ENCODE measurements at regions of chr16 and their contacts with region 1.

Region 1: GRCh38 chr16:27639561-27640276 is 89.8 kb downstream of the KATNIP start:
- DNase-seq: peak; percentile 83
- H3K4me3 ChIP-seq: no peak overlapping the region
- H3K27ac ChIP-seq: no peak overlapping the region
- H3K4me1 ChIP-seq: peaks cover 0 to 9% of the 10 kb centered on the region in 2 experiments; a peak in 1 of 4 replicates
- H3K27me3 ChIP-seq: no peaks in the 10 kb centered on the region
- CTCF ChIP-seq: peak; percentile 80
- EP300 ChIP-seq: no peak
- RAD21 ChIP-seq: peak; percentile 87

Region 2: GRCh38 chr16:27374804-27375425 is 264.8 kb before region 1 on chr16:
- CTCF ChIA-PET with region 1: no interaction called
- POLR2A ChIA-PET with region 1: no interaction called
- DNase-seq: peak; percentile 76
- H3K4me3 ChIP-seq: no peak overlapping the region
- H3K27ac ChIP-seq: no peak overlapping the region
- H3K4me1 ChIP-seq: no peaks in the 10 kb centered on the region
- H3K27me3 ChIP-seq: no peaks in the 10 kb centered on the region; the same call in 1 of the 2 replicates
- CTCF ChIP-seq: peak; percentile 63
- EP300 ChIP-seq: no peak
- RAD21 ChIP-seq: peak; percentile 49

Region 3: GRCh38 chr16:27444015-27444414 is 195.7 kb before region 1 on chr16:
- CTCF ChIA-PET with region 1: no interaction called
- POLR2A ChIA-PET with region 1: no interaction called
- DNase-seq: no peak
- H3K4me3 ChIP-seq: no peak overlapping the region
- H3K27ac ChIP-seq: no peak overlapping the region
- H3K4me1 ChIP-seq: peaks cover 0 to 5% of the 10 kb centered on the region in 2 experiments; a peak in 1 of 4 replicates
- H3K27me3 ChIP-seq: no peaks in the 10 kb centered on the region
- CTCF ChIP-seq: no peak
- EP300 ChIP-seq: no peak
- RAD21 ChIP-seq: no peak

Region 4: DNA sequence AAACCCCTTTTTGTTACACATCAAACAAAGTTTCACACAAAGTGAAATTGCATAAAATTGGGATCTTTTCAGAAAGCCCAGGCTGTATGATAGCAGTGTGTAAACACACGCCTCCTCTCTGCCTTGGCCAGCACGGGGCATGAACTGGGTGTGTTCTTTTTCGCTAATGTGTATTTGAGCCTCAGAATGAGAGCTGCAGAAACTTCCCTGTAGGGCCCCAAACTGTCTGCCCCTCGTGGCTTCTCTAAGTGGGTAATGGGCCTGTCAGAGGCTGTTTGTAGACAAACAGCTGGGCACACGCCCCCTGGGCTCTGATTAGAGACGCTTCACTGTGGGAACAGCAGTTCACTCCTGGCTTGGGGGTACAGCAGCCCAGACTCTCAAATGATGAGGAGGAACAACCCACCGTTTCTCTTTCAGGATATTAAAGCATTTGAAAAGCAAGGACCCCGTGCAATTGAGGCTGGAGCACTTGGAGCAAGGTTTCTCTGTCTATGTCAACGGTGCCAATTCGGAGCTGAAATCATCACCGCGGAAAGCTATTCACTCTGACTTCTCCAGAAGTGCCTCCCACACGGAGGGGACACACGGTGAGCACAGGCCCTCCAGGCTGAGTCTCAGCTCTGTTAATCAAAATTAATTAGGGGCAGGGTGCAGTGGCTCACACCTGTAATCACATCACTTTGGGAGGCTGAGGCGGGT is 11.3 kb before region 1 on chr16:
- CTCF ChIA-PET with region 1: interaction called, 47 read pairs
- POLR2A ChIA-PET with region 1: no interaction called
- DNase-seq: peak; percentile 33
- H3K4me3 ChIP-seq: no peak overlapping the region
- H3K27ac ChIP-seq: no peak overlapping the region
- H3K4me1 ChIP-seq: peaks cover 4 to 27% of the 10 kb centered on the region in 2 experiments; a peak in 2 of 4 replicates
- H3K27me3 ChIP-seq: no peaks in the 10 kb centered on the region
- CTCF ChIP-seq: no peak
- EP300 ChIP-seq: no peak
- RAD21 ChIP-seq: no peak

Region 5: DNA sequence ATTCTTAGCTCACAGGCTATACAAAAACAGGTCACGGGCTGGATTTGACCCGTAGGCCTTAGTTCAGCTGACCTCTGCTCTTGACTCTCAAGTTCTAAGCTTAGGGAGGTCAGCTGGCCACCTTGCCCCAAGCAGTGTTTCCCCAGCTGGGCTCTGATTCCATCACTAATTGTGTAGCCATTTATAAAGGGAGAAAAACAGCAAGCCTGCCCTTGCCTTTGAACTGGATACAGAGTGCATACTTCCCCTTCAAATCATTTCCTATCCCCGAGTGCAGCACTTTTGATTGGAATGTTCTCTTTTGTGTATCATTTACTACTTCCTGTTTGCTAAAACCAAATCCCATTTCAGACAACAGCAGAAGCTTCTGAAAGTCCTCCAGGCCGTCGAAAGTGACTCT is 63.8 kb after region 1 on chr16:
- CTCF ChIA-PET with region 1: interaction called, 11 read pairs
- POLR2A ChIA-PET with region 1: no interaction called
- DNase-seq: no peak
- H3K4me3 ChIP-seq: no peak overlapping the region
- H3K27ac ChIP-seq: peak overlapping the region; percentile 27 to 71; a peak in 3 of 4 replicates
- H3K4me1 ChIP-seq: peaks cover 9 to 23% of the 10 kb centered on the region in 2 experiments
- H3K27me3 ChIP-seq: no peaks in the 10 kb centered on the region
- CTCF ChIP-seq: no peak
- EP300 ChIP-seq: no peak
- RAD21 ChIP-seq: no peak

Region 6: GRCh38 chr16:27859020-27859419 is 219.3 kb after region 1 on chr16:
- CTCF ChIA-PET with region 1: interaction called, 12 read pairs
- POLR2A ChIA-PET with region 1: no interaction called
- DNase-seq: no peak
- H3K4me3 ChIP-seq: no peak overlapping the region
- H3K27ac ChIP-seq: no peak overlapping the region
- H3K4me1 ChIP-seq: no peaks in the 10 kb centered on the region
- H3K27me3 ChIP-seq: no peaks in the 10 kb centered on the region
- CTCF ChIP-seq: no peak
- EP300 ChIP-seq: no peak
- RAD21 ChIP-seq: peak; percentile 8; the same call in 1 of the 2 replicates

Region 7: GRCh38 chr16:27867122-27868110 is 227.7 kb after region 1 on chr16:
- CTCF ChIA-PET with region 1: interaction called, 15 read pairs
- POLR2A ChIA-PET with region 1: no interaction called
- DNase-seq: peak; percentile 92
- H3K4me3 ChIP-seq: no peak overlapping the region
- H3K27ac ChIP-seq: no peak overlapping the region
- H3K4me1 ChIP-seq: no peaks in the 10 kb centered on the region
- H3K27me3 ChIP-seq: no peaks in the 10 kb centered on the region
- CTCF ChIP-seq: peak; percentile 56
- EP300 ChIP-seq: no peak
- RAD21 ChIP-seq: peak; percentile 70

Region 8: GRCh38 chr16:28063641-28064061 is 423.9 kb after region 1 on chr16 and contains the start of gene GSG1L:
- CTCF ChIA-PET with region 1: interaction called, 12 read pairs
- POLR2A ChIA-PET with region 1: no interaction called
- DNase-seq: peak; percentile 83
- H3K4me3 ChIP-seq: peak within 1 kb of the TSS in 1 of 2 experiments; percentile 31; a peak in 2 of 4 replicates
- H3K27ac ChIP-seq: no peak within 1 kb of the TSS
- H3K4me1 ChIP-seq: no peaks in the 10 kb centered on the region
- H3K27me3 ChIP-seq: peaks cover 34% of the 10 kb centered on the region
- CTCF ChIP-seq: no peak
- EP300 ChIP-seq: no peak
- RAD21 ChIP-seq: peak; percentile 28; the same call in 1 of the 2 replicates
- polyA plus RNA-seq, gene GSG1L: not detected in 2 replicates

Measured in SK-N-SH (cell line).